ENCODE measurements at regions of chr15 and their contacts with region 1.

Region 1: DNA sequence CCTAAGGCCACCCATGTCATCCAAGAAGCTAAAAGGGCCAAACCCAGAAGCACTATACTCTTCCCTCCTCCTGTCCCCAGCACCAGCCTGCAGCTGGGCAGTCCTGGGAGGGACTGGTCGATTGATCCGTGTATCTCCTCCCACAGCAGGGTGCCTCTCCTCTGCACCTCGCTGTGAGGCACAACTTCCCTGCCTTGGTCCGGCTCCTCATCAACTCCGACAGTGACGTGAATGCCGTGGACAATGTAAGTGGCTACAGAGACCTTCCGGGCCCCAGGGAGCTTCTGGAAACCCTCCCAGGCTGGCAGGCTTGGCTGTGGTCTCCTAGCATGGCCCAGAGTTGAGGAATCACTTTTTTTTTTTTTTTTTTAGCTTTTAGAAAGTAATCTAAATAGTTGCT is 30.6 kb downstream of the ANKDD1A start:
- DNase-seq: peak; percentile 20
- H3K4me3 ChIP-seq: no peak overlapping the region
- CTCF ChIP-seq: no peak

Region 2: GRCh38 chr15:64989416-64990167 is 47.3 kb after region 1 on chr15 and contains the start of gene SPG21:
- in situ Hi-C with region 1: loop called (anchors 5 kb)
- DNase-seq: peak; percentile 72
- H3K4me3 ChIP-seq: peak within 1 kb of the TSS; percentile 77
- CTCF ChIP-seq: no peak